PC-3 (cell line): ENCODE measurements at regions of chr15 and their contacts with region 1.

Region 1: DNA sequence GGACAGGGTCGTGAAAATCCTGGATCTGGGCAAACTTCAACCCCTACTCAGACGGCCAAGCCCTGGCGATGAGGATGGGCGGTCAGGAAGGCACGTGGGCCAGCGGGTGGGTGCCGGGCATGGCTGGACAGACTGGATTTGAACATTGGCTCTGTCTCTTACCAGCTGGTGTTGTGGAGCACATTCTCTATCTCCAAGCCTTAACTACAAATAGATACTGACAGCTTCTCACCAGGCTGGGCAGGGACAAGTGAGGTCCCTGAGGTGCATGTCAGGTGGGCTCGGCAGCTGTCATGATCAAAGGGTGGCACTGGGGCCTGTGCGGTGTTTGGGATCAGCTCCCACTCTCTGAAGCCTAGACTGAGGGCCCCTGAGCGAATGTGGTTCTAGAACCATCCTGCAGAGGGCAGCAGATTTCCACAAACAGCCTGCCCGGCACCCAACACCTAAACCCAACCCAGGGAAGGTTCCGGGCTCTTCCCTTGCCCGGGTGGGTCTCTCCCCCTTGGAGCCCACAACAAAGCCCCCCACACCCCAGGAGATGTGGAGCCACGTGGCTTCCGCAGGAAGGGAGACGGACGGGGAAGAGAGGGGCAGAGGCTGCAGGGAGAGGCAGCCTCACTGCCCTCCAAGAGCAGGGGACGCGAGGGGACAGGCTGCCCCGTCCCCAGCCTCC is 58.4 kb downstream of the RGMA start:
- DNase-seq: peak; percentile 75
- ATAC-seq: peak; percentile 81
- H3K4me3 ChIP-seq: no peak overlapping the region
- H3K27ac ChIP-seq: no peak overlapping the region
- H3K4me1 ChIP-seq: no peaks in the 10 kb centered on the region
- H3K27me3 ChIP-seq: no peaks in the 10 kb centered on the region
- CTCF ChIP-seq: peak; percentile 86

Region 2: DNA sequence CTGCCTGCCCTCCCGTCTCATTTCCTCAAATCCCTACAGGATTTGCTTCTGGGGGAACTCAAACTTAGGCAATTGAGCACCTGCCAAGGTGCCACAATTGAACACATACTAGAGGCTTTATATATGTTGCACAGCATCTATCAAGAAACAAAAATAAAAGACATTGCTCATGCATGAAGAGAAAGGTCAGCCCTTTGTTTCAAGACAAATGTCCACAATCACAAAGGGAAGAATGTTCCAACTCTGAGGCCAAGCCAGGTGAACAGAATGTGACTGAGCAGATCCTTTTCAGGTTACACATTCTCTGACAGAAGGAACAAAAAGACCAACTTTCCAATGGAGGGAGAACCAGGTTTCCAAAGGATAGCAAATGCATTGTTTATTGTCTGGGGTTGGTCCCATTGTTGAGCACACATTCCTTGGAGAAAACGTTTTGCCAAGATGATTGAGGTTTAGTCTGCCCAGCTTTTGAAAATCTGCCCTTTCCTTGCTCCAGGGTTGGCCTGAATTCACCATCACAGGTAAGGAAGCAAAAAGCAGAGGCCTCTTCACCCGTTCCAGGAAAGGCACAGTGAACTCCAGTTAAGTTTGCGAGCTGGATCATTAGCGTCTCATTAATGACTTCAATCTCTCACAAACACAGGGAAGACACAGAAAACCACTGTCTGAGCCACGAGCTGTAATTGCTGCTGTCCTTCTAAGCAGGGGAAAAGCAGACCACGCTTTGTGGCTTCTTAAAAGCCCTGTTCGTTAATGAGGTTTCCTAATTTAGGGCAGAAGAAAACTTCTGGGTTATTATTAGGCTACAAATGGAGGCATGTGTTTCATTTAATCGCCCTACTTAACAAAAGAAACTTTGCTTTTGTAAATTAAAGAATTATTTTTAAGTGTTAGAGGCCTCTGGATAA is 324.6 kb before region 1 on chr15:
- CTCF ChIA-PET with region 1: interaction called, 10 read pairs
- POLR2A ChIA-PET with region 1: no interaction called
- intact Hi-C with region 1: no loop called
- DNase-seq: no peak
- ATAC-seq: no peak
- H3K4me3 ChIP-seq: no peak overlapping the region
- H3K27ac ChIP-seq: no peak overlapping the region
- H3K4me1 ChIP-seq: no peaks in the 10 kb centered on the region
- H3K27me3 ChIP-seq: peaks cover 20% of the 10 kb centered on the region; the same call in 1 of the 2 replicates
- CTCF ChIP-seq: no peak

Region 3: DNA sequence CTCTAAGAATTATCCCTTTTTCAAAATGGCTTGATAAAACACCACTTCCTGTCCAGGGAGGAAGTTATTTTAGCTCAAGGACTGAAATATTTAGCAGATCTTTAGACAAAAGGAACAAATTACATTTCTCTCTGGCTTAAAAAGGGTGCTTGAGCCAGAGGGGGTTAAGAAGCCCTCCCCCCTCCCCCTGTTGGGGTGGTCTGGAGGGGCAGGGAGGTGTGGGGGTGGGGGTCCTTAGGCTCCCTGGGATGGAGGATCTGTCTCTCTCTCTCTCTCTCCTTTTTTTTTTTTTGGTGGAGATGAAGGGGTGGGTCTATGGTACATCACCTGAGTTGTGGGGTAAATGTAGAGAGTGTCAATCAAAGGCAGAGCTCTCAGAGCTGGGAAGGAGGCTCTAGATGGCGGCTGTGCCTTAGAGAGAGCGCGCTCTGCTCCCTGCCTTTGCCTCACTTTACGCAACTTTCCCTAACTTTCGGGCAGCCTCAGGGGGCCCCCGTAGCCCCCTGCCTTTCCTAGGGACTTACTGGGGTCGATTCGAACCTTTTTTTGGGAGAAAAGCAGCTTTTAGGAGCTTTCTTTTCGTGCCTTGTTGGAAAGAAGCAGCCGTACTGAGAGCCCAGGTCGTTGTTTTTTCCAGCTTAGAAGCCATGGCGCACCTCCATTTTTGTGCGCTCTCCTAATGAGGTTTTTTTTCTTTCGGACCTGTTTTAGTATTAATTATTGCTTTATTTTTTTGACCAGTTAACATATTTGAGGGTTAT is 130.4 kb before region 1 on chr15 and contains the start of gene CHD2:
- CTCF ChIA-PET with region 1: no interaction called
- POLR2A ChIA-PET with region 1: no interaction called
- intact Hi-C with region 1: no loop called
- DNase-seq: peak; percentile 86
- ATAC-seq: peak; percentile 66
- H3K4me3 ChIP-seq: peak within 1 kb of the TSS; percentile 95
- H3K27ac ChIP-seq: peak within 1 kb of the TSS; percentile 91
- H3K4me1 ChIP-seq: peaks cover 17% of the 10 kb centered on the region
- H3K27me3 ChIP-seq: no peaks in the 10 kb centered on the region
- CTCF ChIP-seq: no peak
- total RNA-seq, gene CHD2: 42.7 and 50.6 TPM in 2 replicates

Region 4: GRCh38 chr15:93086791-93087488 is 56.4 kb after region 1 on chr15:
- CTCF ChIA-PET with region 1: interaction called, 10 read pairs
- POLR2A ChIA-PET with region 1: no interaction called
- intact Hi-C with region 1: no loop called
- DNase-seq: no peak
- ATAC-seq: no peak
- H3K4me3 ChIP-seq: no peak overlapping the region
- H3K27ac ChIP-seq: no peak overlapping the region
- H3K4me1 ChIP-seq: no peaks in the 10 kb centered on the region
- H3K27me3 ChIP-seq: peaks cover 85% of the 10 kb centered on the region
- CTCF ChIP-seq: no peak

Region 5: GRCh38 chr15:94119923-94120775 is 1089.6 kb after region 1 on chr15:
- CTCF ChIA-PET with region 1: interaction called, 17 read pairs
- POLR2A ChIA-PET with region 1: no interaction called
- intact Hi-C with region 1: no loop called
- DNase-seq: peak; percentile 86
- ATAC-seq: peak; percentile 54
- H3K4me3 ChIP-seq: no peak overlapping the region
- H3K27ac ChIP-seq: no peak overlapping the region
- H3K4me1 ChIP-seq: no peaks in the 10 kb centered on the region
- H3K27me3 ChIP-seq: 0 out of 2 replicates have a peak, but pooled peaks cover 6% of the 10 kb centered on the region
- CTCF ChIP-seq: peak; percentile 98